ENCODE measurements at regions of chr22 and their contacts with region 1.

Region 1: GRCh38 chr22:37457093-37457893 is 28.9 kb downstream of the MFNG start:
- DNase-seq: peak; percentile 41 to 92
- H3K4me3 ChIP-seq: no peak overlapping the region
- CTCF ChIP-seq: peak in 1 of 3 donors; percentile 42
- POLR2A ChIP-seq: no peak

Region 2: GRCh38 chr22:37316875-37317371 is 140.4 kb before region 1 on chr22:
- intact Hi-C with region 1: loop called (anchors 2 kb)
- DNase-seq: peak in 1 of 2 donors; percentile 57
- H3K4me3 ChIP-seq: no peak overlapping the region
- CTCF ChIP-seq: peak in 1 of 3 donors; percentile 72
- POLR2A ChIP-seq: no peak

Region 3: DNA sequence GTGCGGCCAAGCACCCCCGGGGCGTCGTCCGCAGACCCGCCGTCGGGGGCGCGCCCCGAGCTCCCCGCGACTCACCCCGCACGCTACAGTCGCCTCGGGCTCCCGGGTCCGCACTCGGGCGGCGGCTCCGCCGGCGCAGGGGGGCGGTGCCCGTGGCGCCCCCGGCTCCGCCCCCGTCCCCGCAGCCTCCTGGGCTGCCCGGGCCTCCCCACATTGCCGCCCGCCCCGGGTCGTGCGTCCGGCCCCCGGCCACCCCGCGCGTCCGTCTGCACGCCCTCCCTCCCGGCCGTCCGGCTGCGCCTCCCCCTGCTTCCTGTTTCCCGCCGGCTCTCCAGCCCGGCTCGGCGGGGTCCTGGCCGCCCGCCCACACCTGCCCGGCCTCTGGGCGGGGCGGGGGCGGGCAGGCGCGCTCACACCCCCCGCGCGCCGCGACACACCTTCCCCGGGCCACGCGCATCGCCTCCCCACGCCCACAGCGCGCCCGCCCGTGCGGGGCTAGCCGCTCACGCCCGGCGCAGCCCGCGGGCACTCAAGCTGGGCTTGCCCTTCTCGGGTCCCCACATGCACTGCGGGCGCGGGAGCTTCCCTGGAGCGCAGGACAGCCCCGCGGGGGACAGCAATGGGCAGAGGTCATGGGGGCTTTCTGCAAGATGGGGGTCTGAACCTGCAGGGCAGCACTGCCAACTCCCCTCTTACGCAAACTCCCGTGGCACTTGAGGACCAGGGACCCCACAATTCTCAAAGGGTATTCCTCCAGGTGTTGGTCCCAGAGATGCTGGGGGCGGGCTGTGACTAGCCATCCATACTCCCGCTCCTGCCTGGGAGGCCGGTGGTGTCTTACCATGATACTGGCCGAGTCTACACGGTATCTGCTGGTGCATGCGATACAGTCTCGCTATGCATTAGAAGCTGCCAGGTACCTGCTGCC is 62.2 kb after region 1 on chr22 and contains the start of gene CARD10:
- intact Hi-C with region 1: no loop called
- DNase-seq: no peak
- H3K4me3 ChIP-seq: peak within 1 kb of the TSS; percentile 43
- CTCF ChIP-seq: no peak
- POLR2A ChIP-seq: no peak
- total RNA-seq, gene CARD10: 13.2 to 22.5 (median 18.6) TPM